Activated naive CD4-positive, alpha-beta T cell treated with anti-CD3 and anti-CD28 coated beads for 36 hours (primary cell): ENCODE measurements at regions of chr17 and their contacts with region 1.

Region 1: DNA sequence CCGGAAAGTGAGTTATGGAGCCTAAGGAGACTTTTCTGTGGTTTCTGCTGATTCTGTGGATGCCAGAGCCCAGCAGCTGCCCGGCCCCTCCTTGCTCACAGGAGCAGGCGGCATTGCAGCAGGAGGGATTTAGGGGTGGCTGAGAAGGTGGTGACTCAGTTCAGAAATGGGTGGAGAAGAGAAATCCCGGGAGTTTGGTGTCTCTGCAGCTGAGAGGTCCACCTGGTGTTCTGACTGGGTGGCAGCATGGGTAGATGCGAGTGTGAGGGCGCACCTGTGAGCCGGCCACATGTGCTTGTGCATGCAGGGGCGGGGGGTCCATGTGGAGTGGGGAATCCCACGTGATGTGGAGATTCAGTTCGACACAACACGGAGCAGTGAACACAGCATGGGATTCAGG is 16.1 kb upstream of the SPPL2C start:
- DNase-seq: no peak
- H3K4me3 Mint-ChIP-seq: no peak overlapping the region
- H3K27ac Mint-ChIP-seq: no peak overlapping the region
- H3K4me1 Mint-ChIP-seq: no peaks in the 10 kb centered on the region
- H3K27me3 Mint-ChIP-seq: no peaks in the 10 kb centered on the region

Region 2: DNA sequence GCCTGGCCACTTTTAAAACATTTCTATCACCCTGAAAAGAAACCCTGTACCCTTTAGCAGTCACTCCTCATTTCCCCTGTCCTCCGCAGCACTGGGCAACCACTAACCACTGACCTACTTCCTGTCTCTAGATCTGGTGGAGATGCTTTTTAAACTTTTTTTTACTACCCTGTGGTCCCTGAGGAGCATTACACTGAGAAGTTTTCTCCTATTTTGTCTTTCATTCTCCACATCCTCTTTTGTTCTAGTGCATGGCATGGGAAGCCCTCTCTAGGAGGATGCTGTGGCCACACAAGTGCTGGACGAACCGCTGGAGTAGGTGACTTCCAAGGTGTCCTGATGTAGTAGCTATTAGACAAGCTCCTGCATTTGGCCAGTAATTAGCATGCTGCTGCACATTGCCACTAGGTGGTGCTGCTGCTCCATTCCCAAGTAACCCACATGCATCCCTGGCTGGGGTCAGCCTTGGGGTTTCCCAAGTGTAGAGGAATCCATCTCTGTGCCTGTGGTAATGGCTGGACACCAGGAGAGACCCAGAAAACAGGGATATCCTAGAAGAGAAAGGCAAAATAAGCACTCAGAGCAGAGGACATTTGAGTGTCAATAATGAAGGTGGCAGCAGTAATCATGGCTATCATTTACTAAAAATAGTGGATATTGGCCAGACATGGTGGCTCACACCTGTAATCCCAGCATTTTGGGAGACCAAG is 188.3 kb before region 1 on chr17:
- CTCF ChIA-PET with region 1: interaction called, 40 read pairs
- intact Hi-C with region 1: loop called (anchors 1 kb)
- DNase-seq: peak; percentile 84
- H3K4me3 Mint-ChIP-seq: no peak overlapping the region
- H3K27ac Mint-ChIP-seq: no peak overlapping the region
- H3K4me1 Mint-ChIP-seq: no peaks in the 10 kb centered on the region
- H3K27me3 Mint-ChIP-seq: no peaks in the 10 kb centered on the region

Region 3: DNA sequence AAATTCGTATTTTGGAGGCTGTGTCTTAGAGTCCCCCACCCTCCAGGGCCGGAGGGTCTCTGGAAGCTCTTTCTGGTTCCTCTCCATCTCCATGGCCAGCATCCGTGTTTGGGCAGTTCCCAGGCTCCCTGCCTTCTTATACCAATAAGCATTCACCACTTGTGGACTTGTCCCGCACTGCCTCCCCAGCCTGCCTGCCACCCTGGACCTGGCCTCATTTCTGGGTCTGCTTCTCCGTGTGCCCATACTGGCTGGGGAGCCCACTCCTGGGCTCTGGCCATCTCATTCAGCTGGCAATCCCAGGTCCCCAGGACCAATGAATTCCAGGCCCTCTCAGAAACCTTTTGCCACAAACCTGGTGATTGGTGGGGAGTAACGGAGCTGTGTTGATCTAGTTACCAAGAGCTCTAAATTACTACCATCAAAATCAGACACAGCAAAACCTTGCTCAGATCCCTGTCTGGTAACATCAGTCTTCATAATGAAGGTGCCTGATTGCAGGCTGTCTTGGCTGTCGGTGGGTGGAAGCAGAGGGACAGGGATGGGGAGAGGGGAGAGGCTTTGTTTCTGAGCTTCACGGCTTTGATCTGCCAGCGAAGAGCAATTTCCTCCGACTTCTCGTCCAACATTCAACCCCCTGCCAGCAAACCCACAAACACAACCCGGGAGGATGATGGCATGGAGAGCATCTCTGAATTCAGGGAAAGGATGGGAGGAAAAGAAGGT is 72.2 kb before region 1 on chr17:
- CTCF ChIA-PET with region 1: interaction called, 3 read pairs
- intact Hi-C with region 1: loop called (anchors 1 kb)
- DNase-seq: no peak
- H3K4me3 Mint-ChIP-seq: no peak overlapping the region
- H3K27ac Mint-ChIP-seq: no peak overlapping the region
- H3K4me1 Mint-ChIP-seq: no peaks in the 10 kb centered on the region
- H3K27me3 Mint-ChIP-seq: peaks cover 12% of the 10 kb centered on the region

Region 4: DNA sequence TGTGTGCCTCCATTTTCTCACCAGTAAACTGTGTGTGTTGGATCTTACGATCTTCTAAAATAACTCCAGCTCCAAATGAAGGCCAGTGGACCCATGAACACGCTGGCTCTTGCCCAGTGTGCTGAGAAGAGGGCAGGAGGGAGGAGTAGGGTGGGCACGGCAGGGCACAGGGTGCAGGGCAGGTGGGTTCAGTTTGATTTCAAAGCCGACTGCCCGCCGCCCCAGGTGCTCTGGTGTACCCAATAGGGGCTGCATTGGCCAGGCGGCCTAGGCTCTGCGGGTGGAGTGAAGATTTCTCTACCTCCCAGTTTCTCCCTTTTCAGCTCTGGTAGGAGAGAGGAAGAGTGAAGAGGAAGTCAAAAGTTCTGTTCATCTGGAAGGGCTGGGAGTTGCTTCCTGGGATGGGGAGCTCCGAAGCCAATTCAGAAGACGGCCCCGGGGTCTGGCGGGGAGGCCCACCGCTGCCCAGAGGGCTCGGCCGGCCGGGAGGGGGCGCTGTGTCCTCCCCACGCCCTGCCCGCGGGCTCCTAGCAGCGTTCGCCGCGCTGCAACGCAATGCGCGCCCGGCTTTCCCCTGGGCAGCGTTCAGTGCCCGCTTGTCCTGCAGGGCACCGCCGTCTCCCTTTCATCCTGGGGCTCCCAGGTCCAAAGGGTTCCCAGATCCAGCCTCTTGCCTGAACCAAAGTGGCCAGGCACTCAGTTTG is 45.6 kb before region 1 on chr17:
- CTCF ChIA-PET with region 1: interaction called, 5 read pairs
- intact Hi-C with region 1: loop called (anchors 1 kb)
- DNase-seq: peak; percentile 43
- H3K4me3 Mint-ChIP-seq: peak overlapping the region; percentile 67
- H3K27ac Mint-ChIP-seq: no peak overlapping the region
- H3K4me1 Mint-ChIP-seq: peaks cover 4% of the 10 kb centered on the region
- H3K27me3 Mint-ChIP-seq: peaks cover 54% of the 10 kb centered on the region

Region 5: GRCh38 chr17:45841883-45842525 is 13.4 kb after region 1 on chr17:
- CTCF ChIA-PET with region 1: no interaction called
- intact Hi-C with region 1: no loop called
- DNase-seq: no peak
- H3K4me3 Mint-ChIP-seq: no peak overlapping the region
- H3K27ac Mint-ChIP-seq: no peak overlapping the region
- H3K4me1 Mint-ChIP-seq: no peaks in the 10 kb centered on the region
- H3K27me3 Mint-ChIP-seq: no peaks in the 10 kb centered on the region

Region 6: GRCh38 chr17:45852535-45853297 is 24.1 kb after region 1 on chr17:
- CTCF ChIA-PET with region 1: interaction called, 10 read pairs
- intact Hi-C with region 1: no loop called
- DNase-seq: peak; percentile 79
- H3K4me3 Mint-ChIP-seq: no peak overlapping the region
- H3K27ac Mint-ChIP-seq: no peak overlapping the region
- H3K4me1 Mint-ChIP-seq: no peaks in the 10 kb centered on the region
- H3K27me3 Mint-ChIP-seq: peaks cover 15% of the 10 kb centered on the region